GM18951 (cell line): ENCODE measurements at regions of chr7 and their contacts with region 1.

Region 1: GRCh38 chr7:31122649-31123058 is 70.5 kb downstream of the ADCYAP1R1 start:
- POLR2A ChIP-seq: no peak

Region 2: DNA sequence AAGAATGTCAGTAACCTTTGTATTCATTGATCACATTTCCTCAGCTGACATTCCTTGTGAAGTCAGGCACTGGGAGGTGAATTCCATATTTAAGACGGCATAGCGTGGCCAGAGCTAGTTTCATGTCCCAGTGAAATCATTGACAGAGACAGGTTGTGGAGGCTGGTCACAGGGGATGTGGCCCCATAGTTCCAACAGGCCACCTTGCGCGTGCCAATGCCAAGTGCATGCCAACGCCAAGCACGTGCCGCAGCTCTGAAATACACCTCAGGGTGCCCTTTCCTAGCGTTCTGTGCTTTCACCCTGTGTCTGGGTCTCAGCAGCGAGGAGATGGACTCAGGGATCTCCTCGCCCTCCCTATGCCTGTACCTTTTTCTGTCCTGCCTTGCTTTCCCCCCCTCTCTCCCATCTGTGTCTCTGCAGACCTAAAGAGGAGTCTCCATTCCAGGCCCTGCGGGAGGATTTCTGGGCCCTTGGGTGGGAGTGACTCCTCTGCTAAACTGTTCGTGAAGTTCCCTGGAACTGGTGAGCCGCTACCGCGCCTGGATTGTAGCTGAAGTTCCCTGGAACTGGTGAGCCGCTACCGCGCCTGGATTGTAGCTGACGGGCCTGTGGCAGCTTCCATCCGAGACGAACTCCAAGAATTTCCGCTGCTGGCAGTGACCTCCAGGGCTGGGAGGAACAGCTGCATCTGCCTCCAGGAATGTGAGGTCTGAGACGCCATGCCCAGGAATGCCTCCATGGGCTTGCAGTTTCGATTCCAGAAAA is 191.3 kb before region 1 on chr7:
- in situ Hi-C with region 1: no loop called
- POLR2A ChIP-seq: no peak

Region 3: DNA sequence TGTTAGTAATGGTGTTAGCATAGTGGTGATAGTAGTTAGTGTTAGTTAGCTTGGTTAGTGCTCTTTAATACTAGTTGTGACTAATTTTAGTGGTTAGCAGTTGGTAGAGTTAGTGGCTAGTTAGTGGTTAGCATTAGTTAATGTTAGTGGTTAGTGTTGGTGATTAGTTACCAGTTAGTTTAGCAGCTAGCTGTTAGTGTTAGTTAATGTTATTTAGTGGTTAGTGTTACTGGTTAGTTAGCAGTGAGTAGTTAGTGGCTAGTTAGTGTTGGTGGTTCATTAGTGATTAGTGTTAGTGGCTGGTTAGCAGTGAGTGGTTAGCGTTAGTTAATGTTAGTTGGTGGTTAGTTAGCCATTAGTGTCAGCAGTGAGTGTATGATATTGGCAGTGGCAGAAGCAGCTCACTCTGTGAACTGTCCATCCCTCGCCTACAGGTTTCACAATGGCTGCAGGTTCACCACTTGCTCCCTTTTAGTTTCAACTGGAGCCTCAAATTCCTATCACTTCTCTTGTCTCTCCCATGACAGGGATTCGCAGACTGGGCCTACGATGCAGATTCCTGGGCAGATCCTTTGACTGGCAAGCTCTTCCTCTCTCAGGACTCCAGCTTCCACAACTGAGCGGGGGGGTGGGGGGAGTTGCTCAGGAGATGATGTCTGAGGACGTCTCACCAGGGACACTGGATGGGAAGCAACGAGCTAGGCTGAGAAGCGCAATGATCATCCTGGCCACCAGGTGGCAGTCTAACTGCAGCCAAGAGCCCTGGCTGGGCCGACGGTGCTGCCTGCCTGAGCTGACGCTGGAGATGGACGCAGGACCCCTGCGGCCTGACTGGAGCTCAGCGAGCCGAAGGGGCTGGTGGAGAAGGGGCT is 139.4 kb before region 1 on chr7:
- in situ Hi-C with region 1: loop called (anchors 10 kb)
- POLR2A ChIP-seq: no peak